WTC11 (cell line): ENCODE measurements at regions of chr6 and their contacts with region 1.

Region 1: DNA sequence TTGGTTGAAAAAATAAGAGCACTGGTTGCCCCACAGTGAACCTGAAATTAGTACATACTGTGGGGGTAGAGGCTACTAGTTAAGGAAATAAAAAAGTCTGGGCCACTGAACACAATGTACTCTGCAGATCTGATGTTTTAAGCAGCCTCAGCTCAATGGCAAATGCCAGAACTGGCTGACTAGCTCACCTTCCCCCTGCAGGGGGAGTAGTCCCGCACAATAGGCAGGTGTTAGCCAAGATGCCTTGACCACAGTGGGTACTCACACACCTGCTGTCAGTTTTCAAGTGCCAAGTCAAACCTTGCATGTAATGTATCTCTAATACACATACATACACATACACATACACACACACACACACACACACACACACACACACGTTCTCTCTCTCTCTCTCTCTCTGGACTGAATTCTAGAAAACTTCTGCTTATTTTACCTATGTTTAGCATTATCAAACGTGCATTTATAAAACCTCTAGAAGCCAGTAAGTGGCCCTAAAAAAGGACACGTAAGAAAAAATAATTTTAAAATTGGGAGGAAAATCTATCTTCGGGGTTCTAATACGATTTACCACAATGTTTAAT is 36.1 kb downstream of the GMDS start:
- DNase-seq: peak; percentile 81
- ATAC-seq: peak; percentile 99
- H3K4me3 Mint-ChIP-seq: no peak overlapping the region
- H3K27ac Mint-ChIP-seq: no peak overlapping the region
- H3K4me1 Mint-ChIP-seq: peaks cover 32% of the 10 kb centered on the region
- H3K27me3 Mint-ChIP-seq: no peaks in the 10 kb centered on the region
- CTCF ChIP-seq: peak; percentile 53; the same call in 1 of the 2 replicates

Region 2: DNA sequence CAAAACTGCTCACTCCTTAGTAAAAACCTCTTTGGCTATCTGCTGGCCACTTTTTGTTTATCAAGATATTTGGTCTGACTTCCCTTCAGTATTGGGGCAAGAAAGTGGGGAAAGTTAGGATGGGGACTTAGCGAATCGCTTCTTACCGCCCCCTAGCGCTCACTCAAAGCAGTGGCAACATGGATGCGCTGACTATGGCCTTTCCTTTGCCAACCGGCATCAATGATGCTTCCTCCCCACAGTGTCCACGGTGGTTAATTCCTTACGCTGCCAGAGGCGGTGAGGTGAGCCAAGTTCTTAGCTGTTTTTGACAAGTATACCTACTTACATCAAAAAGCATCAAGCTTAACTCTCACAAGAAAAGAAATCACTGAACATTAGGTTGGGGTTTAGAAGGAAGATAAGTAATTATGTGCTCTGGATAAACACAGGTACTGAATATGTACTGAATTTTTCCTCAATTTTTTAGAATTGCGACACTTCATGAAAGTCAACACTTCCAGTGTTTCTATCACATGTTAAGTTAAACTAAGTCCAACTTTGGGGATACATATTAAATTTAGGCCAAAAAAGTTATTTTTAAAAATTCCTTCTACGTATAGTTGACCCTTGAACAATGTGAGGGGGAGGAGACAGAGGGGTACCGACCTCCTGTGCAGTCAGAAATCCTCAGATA is 50.6 kb before region 1 on chr6:
- CTCF ChIA-PET with region 1: interaction called, 11 read pairs
- POLR2A ChIA-PET with region 1: no interaction called
- DNase-seq: peak; percentile 81
- ATAC-seq: peak; percentile 100
- H3K4me3 Mint-ChIP-seq: no peak overlapping the region
- H3K27ac Mint-ChIP-seq: no peak overlapping the region
- H3K4me1 Mint-ChIP-seq: peaks cover 19% of the 10 kb centered on the region
- H3K27me3 Mint-ChIP-seq: no peaks in the 10 kb centered on the region
- CTCF ChIP-seq: peak; percentile 77

Region 3: DNA sequence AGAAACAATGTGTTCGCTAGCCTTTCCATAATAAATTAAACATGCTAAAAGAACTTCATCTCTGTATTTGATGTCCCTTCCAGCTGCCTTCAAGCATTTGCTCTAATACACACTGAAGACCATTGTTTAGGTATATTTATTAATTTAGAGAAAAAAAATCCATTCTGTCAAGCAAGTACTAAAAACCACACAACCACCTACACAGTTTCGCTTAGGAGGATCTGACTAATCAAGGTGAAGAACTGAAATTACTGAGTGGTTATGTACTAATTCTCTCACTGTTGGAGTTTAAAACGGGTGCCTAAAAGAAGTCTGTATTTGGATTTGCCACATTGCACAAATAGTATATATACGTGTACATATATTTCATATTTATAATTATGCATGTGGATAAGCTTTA is 22.8 kb before region 1 on chr6:
- CTCF ChIA-PET with region 1: interaction called, 13 read pairs
- POLR2A ChIA-PET with region 1: no interaction called
- DNase-seq: no peak
- ATAC-seq: no peak
- H3K4me3 Mint-ChIP-seq: no peak overlapping the region
- H3K27ac Mint-ChIP-seq: no peak overlapping the region
- H3K4me1 Mint-ChIP-seq: peaks cover 31% of the 10 kb centered on the region
- H3K27me3 Mint-ChIP-seq: no peaks in the 10 kb centered on the region
- CTCF ChIP-seq: no peak

Region 4: DNA sequence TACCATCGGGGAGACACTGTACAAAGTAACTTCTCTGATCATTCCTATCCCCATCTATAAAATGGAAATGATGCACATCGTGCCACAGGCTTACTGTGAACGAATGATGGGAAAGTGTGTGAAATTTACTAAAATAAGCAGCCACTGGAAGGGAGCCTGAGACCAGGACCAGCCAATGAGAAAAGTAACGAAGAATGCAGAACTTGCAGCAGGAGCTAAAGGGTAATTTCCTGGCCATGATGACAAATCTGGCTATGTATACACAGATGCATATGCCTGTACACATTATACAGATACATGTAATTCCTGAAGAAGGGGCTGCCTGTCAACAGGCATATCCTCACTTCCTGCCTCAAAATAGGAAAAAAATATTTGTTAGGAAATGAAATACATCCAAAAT is 11.3 kb before region 1 on chr6:
- CTCF ChIA-PET with region 1: interaction called, 10 read pairs
- POLR2A ChIA-PET with region 1: no interaction called
- DNase-seq: no peak
- ATAC-seq: no peak
- H3K4me3 Mint-ChIP-seq: no peak overlapping the region
- H3K27ac Mint-ChIP-seq: no peak overlapping the region
- H3K4me1 Mint-ChIP-seq: peaks cover 19% of the 10 kb centered on the region
- H3K27me3 Mint-ChIP-seq: no peaks in the 10 kb centered on the region
- CTCF ChIP-seq: no peak

Region 5: DNA sequence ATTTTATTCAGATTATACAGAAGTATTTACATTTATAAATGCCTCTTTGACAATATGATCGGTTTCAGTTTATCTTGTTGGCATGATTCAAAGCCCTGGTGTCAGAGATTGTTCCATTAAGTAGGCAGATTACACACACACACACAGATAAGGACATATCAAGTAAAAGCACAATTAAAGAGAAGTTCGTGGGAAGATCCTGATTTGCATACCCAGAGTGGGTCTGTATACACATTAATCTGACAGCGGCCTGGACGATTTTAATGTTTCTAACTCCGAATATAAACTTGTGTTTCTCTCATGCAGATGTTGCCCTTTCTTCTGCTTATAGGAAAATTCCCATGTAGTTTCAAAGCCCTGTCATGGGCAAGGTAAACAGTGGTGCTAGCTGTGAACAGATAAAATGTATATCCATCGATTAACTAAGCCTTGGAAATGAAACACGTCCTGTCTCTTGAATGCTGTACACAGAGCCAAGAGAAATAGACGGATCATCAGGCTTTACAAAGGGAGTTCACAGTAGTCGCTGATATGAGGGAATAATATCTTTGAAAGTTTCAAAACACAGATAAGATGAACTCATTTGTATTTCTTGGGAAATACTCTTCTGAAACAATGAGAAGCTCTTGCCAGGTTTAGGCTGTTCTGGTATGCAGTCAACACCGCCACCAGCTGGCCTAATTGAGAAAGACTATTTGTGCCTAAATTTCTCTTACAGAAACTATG is 144.3 kb after region 1 on chr6:
- CTCF ChIA-PET with region 1: interaction called, 63 read pairs
- POLR2A ChIA-PET with region 1: interaction called, 3 read pairs
- DNase-seq: peak; percentile 71
- ATAC-seq: peak; percentile 73
- H3K4me3 Mint-ChIP-seq: no peak overlapping the region
- H3K27ac Mint-ChIP-seq: no peak overlapping the region
- H3K4me1 Mint-ChIP-seq: peaks cover 7% of the 10 kb centered on the region
- H3K27me3 Mint-ChIP-seq: no peaks in the 10 kb centered on the region
- CTCF ChIP-seq: no peak; the same call in 1 of the 2 replicates